Sciatic nerve (tissue), 2 donors: ENCODE measurements at regions of chrX and their contacts with region 1.

Region 1: DNA sequence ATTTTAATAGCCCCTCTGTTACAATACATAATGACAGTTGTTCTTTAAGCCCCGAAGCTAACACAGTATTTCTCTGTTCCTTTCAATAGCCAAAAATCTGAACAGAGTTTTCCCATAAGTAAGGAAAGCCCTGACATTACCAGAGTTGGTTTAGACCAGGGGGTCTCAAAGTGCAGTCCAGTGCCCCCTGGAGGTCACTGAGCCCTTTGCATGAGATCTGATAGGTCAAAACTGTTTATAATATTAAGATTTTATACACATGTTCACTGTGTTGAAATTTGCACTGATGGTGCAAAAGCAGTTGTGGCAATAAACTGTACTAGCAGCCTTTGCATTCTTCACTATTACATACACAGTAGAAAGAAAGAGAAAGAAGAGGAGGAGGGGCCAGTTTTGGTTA is 177.1 kb downstream of the SPANXN3 start:
- DNase-seq: no peak
- ATAC-seq: no peak

Region 2: GRCh38 chrX:145178268-145178667 is 1838.1 kb after region 1 on chrX:
- intact Hi-C with region 1: loop called (anchors 10 kb)
- DNase-seq: no peak
- ATAC-seq: no peak